ENCODE measurements at regions of chr4 and their contacts with region 1.

Region 1: GRCh38 chr4:78517050-78517652 is 34.4 kb upstream of the ANXA3 start:
- DNase-seq: peak; percentile 17
- H3K4me3 ChIP-seq: no peak overlapping the region
- H3K27ac ChIP-seq: no peak overlapping the region
- H3K4me1 ChIP-seq: no peaks in the 10 kb centered on the region
- H3K27me3 ChIP-seq: no peaks in the 10 kb centered on the region
- CTCF ChIP-seq: peak; percentile 65 to 70

Region 2: GRCh38 chr4:77959566-77960338 is 557.4 kb before region 1 on chr4:
- CTCF ChIA-PET with region 1: interaction called, 5 read pairs
- dilution Hi-C with region 1: no loop called
- in situ Hi-C with region 1: loop called (anchors 10 to 25 kb)
- intact Hi-C with region 1: loop called (anchors 1 kb)
- DNase-seq: peak; percentile 25
- H3K4me3 ChIP-seq: no peak overlapping the region
- H3K27ac ChIP-seq: no peak overlapping the region
- H3K4me1 ChIP-seq: no peaks in the 10 kb centered on the region
- H3K27me3 ChIP-seq: no peaks in the 10 kb centered on the region
- CTCF ChIP-seq: peak; percentile 50 to 58

Region 3: DNA sequence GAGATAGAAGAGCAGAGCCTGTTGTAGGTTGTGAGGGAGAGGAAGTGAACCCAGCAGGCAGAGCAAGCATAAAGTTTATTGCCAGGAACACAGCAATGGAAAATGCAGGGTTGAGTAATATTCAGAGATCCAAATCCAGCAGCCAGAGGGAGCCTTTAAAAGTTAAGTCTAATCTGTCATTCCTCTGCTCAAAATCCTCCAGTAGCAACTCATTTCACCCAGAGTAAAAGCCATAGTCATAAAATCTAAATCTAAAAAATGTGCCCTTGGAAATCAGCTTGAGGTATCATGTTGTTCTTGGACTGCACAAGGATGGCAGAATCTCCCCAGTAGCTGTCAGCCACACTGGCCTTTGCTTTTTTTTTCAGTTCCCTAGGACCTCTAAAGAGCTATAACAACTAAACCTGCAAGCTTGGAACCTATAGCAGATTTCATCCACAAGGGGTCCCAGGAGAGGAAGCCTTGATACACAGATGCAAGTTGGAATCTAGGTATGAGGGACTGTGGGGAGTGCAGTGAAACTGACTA is 522.9 kb before region 1 on chr4:
- CTCF ChIA-PET with region 1: no interaction called
- dilution Hi-C with region 1: no loop called
- in situ Hi-C with region 1: no loop called
- intact Hi-C with region 1: loop called (anchors 1 kb)
- DNase-seq: peak; percentile 47
- H3K4me3 ChIP-seq: no peak overlapping the region
- H3K27ac ChIP-seq: no peak overlapping the region
- H3K4me1 ChIP-seq: no peaks in the 10 kb centered on the region
- H3K27me3 ChIP-seq: no peaks in the 10 kb centered on the region
- CTCF ChIP-seq: peak; percentile 68 to 73

Region 4: DNA sequence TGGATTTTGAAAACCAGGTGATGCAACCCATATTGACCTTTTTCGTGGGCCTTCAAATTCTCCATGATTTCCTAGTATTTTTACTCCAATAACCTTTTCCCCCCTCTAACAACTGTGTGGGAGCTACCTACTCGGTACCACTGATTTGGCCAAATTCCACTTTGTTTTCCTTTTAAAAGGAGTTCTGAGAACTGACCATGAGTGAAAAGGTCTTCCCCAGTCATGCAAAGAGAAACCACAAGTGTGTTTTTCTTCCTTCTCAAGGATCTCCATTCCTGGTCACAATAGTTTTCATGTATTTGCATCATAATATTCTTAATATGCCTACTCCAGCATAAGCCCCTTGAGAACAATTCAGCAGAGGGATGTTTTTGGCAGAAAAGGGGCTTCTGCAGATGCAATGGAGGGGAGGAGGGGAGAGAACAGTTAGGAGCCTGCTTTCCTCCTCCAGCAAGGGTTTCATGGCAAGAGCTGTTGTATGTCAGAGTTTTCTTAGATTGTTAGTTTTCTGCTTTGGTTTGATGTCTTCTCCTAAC is 160.8 kb before region 1 on chr4:
- CTCF ChIA-PET with region 1: no interaction called
- dilution Hi-C with region 1: no loop called
- in situ Hi-C with region 1: no loop called
- intact Hi-C with region 1: no loop called
- DNase-seq: no peak
- H3K4me3 ChIP-seq: no peak overlapping the region
- H3K27ac ChIP-seq: no peak overlapping the region
- H3K4me1 ChIP-seq: no peaks in the 10 kb centered on the region
- H3K27me3 ChIP-seq: no peaks in the 10 kb centered on the region
- CTCF ChIP-seq: no peak

Region 5: GRCh38 chr4:78551479-78552351 is 34.6 kb after region 1 on chr4 and contains the start of gene ANXA3:
- CTCF ChIA-PET with region 1: no interaction called
- dilution Hi-C with region 1: no loop called
- in situ Hi-C with region 1: no loop called
- intact Hi-C with region 1: loop called (anchors 1 kb)
- DNase-seq: peak; percentile 70
- H3K4me3 ChIP-seq: peak within 1 kb of the TSS; percentile 76 to 97 (median 82)
- H3K27ac ChIP-seq: peak within 1 kb of the TSS; percentile 100
- H3K4me1 ChIP-seq: peaks cover 39% of the 10 kb centered on the region
- H3K27me3 ChIP-seq: no peaks in the 10 kb centered on the region
- CTCF ChIP-seq: peak in 1 of 2 donors; percentile 0
- total RNA-seq, gene ANXA3: 325 to 422 TPM

Region 6: GRCh38 chr4:78644744-78645330 is 127.7 kb after region 1 on chr4:
- CTCF ChIA-PET with region 1: no interaction called
- dilution Hi-C with region 1: no loop called
- in situ Hi-C with region 1: no loop called
- intact Hi-C with region 1: no loop called
- DNase-seq: peak; percentile 71
- H3K4me3 ChIP-seq: no peak overlapping the region
- H3K27ac ChIP-seq: peak overlapping the region; percentile 79
- H3K4me1 ChIP-seq: peaks cover 28% of the 10 kb centered on the region
- H3K27me3 ChIP-seq: no peaks in the 10 kb centered on the region
- CTCF ChIP-seq: peak; percentile 98 to 99